Activated T-helper 1 cell treated with anti-CD3 and anti-CD28 coated beads, Interleukin-12 subunit alpha, Interleukin-12 subunit beta, Interleukin-2, Interleukin-4 antibody, amounts not matched to agents 30 ng/mL and 10 ng/mL and 1 ng/mL, durations not matched to agents 14 hours and 24 hours and 36 hours (primary cell): ENCODE measurements at regions of chr4 and their contacts with region 1.

Region 1: DNA sequence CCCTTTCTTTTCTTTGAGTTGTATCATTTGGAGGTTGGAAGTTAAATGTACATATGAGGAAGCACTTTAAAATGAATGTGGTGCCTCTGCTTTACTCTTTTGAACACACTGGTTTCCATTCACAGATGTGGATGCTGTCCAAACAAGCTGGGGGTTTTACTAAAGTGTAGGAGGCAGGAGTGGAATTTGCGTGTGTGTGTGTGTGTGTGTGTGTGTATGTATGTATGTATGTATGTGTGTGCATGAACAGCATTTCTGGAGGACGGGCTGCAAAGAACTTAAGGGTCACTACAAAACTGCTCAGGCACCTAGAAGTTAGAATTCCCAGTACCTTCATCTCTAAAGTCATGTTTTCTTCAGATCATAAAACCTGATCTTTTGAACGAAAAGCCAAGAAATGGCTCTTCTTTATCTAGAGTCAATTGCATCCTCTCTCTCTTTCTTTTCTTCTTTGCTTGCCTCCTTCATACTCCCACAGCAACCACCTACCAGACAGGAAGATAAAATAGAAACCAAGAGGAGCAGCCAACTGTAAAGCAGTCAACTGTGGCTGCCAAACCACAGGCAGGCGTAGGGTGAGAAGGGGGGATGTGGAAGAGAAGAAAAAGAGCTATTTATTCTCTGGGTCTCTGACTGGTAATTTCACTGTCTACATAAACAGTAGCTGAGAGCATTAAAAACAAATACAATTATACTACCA is 177.0 kb upstream of the RASGEF1B start:
- DNase-seq: peak; percentile 37
- H3K4me3 Mint-ChIP-seq: peak overlapping the region; percentile 46
- H3K27ac Mint-ChIP-seq: peak overlapping the region; percentile 81
- H3K4me1 Mint-ChIP-seq: peaks cover 57% of the 10 kb centered on the region
- H3K27me3 Mint-ChIP-seq: no peaks in the 10 kb centered on the region

Region 2: DNA sequence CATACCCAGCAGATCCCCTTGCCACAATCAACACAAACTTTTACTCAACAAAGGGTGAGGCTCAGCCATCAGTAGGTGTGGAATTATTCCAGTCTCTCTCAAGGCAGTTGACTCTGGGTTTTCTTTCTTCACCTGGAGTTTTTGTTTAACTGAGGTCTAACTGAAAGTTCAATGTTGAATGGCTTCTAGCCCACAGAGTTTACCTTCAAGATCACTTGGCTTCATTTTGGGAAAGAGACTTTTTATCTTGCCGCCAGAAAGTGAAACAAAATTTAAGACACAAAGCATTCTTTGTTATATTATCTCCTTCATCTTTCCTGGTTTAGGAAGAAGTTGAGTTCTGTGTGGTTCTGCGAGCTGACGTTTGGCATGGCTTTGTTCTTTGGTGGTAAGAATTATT is 93.2 kb before region 1 on chr4:
- intact Hi-C with region 1: loop called (anchors 5 kb)
- DNase-seq: no peak
- H3K4me3 Mint-ChIP-seq: no peak overlapping the region
- H3K27ac Mint-ChIP-seq: no peak overlapping the region
- H3K4me1 Mint-ChIP-seq: peaks cover 16% of the 10 kb centered on the region
- H3K27me3 Mint-ChIP-seq: no peaks in the 10 kb centered on the region

Region 3: GRCh38 chr4:81635739-81636138 is 13.0 kb before region 1 on chr4:
- intact Hi-C with region 1: loop called (anchors 2 kb)
- DNase-seq: no peak
- H3K4me3 Mint-ChIP-seq: no peak overlapping the region
- H3K27ac Mint-ChIP-seq: no peak overlapping the region
- H3K4me1 Mint-ChIP-seq: peaks cover 5% of the 10 kb centered on the region
- H3K27me3 Mint-ChIP-seq: no peaks in the 10 kb centered on the region

Region 4: DNA sequence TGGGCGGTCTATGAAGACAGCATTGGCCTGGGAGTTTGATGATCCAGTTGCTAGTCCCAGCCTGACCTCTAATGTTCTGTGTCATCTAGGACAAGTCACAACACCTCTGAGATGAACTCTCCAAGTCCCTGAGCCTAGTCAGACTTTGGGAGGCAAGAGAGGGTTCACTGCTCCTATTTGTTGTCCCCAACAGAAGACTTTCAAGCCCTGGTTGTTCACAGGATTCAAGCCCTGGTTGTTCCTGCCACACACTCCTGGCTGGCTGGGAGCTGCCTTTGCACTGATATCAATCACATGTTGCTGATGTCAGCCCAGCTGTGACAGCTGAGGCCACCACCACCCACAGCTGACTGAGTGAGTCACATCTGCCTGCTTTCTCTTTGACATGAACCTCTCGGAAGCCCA is 76.2 kb after region 1 on chr4:
- intact Hi-C with region 1: loop called (anchors 5 kb)
- DNase-seq: peak; percentile 37
- H3K4me3 Mint-ChIP-seq: no peak overlapping the region
- H3K27ac Mint-ChIP-seq: no peak overlapping the region
- H3K4me1 Mint-ChIP-seq: peaks cover 17% of the 10 kb centered on the region
- H3K27me3 Mint-ChIP-seq: peaks cover 19% of the 10 kb centered on the region

Region 5: GRCh38 chr4:81747242-81747930 is 98.7 kb after region 1 on chr4:
- intact Hi-C with region 1: no loop called
- DNase-seq: no peak
- H3K4me3 Mint-ChIP-seq: no peak overlapping the region
- H3K27ac Mint-ChIP-seq: no peak overlapping the region
- H3K4me1 Mint-ChIP-seq: no peaks in the 10 kb centered on the region
- H3K27me3 Mint-ChIP-seq: no peaks in the 10 kb centered on the region

Region 6: DNA sequence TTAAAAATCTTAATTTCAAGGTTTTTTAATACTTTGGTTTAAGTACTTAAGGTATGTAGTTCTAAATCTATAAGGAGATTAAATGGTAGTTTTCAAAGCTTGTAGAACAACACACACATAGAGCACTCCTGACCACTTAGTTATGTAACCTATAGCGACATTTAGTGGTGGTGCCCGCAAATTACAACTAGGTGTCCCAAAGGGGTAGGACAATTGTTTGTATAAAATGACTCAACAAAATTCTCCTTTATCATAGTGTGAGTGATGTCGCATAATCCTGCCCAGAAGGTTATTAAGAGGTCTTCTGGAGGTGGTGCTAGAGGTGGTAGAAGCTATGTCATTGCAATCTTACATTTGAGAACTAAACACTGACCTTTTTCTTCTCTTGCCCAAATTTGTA is 196.0 kb after region 1 on chr4:
- intact Hi-C with region 1: loop called (anchors 5 kb)
- DNase-seq: peak; percentile 46
- H3K4me3 Mint-ChIP-seq: no peak overlapping the region
- H3K27ac Mint-ChIP-seq: no peak overlapping the region
- H3K4me1 Mint-ChIP-seq: peaks cover 4% of the 10 kb centered on the region
- H3K27me3 Mint-ChIP-seq: peaks cover 7% of the 10 kb centered on the region

Region 7: DNA sequence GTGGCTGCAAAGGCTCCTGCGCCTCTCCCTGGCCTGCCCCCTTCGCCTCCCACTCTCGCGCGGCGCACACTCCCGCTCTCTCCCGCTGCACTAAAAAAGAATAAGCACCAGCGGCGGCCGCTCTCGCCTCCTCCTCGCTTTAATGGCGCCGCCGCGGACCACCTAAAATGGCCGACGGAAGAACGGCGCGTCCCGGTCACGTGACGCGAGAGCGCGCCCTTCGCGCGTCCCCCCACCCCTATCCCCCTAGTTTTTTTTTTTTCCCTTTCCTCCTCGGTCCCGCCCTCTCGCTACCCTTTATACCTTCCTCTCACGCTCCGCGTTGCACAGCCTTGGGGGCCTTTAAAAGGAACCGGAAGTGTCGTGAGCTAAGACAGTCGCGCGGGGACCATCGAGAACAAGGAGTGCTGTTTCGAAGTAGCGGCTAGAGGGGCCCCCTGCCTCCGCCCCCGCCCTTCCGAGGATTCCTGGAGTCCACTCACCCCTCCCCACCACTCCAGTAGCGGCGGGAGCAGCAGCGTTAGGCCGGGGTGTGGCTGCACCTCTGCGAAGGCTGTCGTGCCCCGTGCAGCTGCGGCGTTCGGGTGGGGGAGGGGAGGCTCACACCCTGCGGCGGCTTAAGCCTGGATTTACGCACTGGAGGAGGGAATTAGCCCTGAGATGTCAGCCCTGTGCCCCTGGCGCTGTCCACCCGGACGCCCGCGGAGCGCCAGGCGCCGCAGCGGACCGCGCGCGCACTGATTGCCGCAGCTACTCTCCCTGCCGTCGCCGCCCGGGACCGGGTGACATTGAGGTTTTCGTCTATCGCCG is 725.3 kb after region 1 on chr4 and contains the start of gene HNRNPD:
- intact Hi-C with region 1: loop called (anchors 5 kb)
- DNase-seq: peak; percentile 92
- H3K4me3 Mint-ChIP-seq: peak within 1 kb of the TSS; percentile 99
- H3K27ac Mint-ChIP-seq: peak within 1 kb of the TSS; percentile 100
- H3K4me1 Mint-ChIP-seq: peaks cover 37% of the 10 kb centered on the region
- H3K27me3 Mint-ChIP-seq: peaks cover 2% of the 10 kb centered on the region
- total RNA-seq, gene HNRNPD: 434 and 438 TPM in 2 replicates